ENCODE measurements at regions of chr11 and their contacts with region 1.

Region 1: GRCh38 chr11:76318744-76319384 is 62.1 kb downstream of the THAP12 start:
- DNase-seq: peak; percentile 56 to 95 (median 86)

Region 2: DNA sequence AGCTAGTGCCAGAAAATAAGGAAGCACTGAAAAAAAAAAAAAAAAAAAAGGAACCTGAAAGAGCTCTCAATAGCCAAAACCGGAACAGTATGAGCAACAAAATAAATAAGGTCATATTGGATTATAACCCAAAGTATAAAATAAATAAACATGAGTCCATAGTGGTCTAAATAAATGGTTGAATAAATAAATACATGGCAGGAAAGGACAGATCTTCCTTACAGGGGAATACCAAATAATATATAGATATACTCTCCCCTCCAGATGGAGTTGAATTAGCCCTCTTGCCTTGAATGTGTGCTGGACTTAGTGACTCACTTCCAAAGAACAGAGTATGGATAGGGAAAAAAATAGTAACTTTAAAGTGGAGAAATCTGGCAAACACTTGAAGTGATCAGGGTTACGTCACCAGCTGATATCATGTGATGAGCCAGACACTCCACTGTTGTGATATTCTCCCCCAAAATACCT is 953.1 kb before region 1 on chr11:
- intact Hi-C with region 1: no loop called
- DNase-seq: no peak

Region 3: DNA sequence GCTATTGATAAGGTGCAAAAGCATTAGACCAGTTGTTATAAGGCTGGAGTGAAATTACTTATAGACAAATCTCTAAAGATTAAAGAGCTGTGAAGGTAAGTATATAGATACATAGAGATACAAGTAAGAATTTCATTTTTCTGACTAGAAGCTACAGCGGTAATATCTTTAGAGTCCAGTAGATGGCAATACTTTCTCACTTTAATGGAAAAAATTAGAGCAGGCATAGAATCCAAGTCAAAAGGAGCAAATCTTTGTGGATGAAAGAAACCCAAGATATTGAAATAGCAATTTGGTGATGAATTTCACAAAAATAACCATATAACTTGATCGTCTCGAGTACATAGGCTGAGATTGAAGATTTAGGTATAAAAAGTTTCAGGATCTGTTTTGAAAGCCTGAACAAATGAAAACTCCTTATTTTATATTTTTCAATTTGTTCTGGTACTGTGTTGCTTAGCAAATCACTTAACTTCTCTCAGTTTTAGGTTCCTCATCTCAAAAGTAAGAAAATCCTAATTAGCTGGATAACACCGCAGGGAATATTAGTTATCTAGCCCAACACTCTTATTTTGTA is 421.9 kb before region 1 on chr11:
- intact Hi-C with region 1: loop called (anchors 10 kb)
- DNase-seq: no peak

Region 4: DNA sequence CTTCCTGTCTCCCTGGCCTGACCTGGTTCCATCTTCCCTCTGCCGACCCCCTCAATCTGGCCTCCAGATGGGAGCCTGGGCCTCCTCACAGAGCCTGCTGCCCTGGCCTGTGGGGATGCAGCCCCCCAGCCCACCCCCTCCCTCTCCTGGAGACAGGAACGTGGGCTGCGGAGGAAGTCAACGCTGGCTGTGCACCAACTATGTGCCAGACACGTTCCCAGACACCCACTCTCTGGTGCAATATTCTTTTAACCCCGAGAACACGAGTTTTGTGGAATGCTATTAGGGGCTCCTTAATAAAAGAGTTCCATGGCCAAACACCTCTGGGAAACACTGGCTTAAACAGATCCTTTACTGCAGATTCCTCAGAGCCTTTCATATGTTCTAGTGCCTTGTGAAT is 128.5 kb before region 1 on chr11:
- intact Hi-C with region 1: no loop called
- DNase-seq: no peak

Region 5: DNA sequence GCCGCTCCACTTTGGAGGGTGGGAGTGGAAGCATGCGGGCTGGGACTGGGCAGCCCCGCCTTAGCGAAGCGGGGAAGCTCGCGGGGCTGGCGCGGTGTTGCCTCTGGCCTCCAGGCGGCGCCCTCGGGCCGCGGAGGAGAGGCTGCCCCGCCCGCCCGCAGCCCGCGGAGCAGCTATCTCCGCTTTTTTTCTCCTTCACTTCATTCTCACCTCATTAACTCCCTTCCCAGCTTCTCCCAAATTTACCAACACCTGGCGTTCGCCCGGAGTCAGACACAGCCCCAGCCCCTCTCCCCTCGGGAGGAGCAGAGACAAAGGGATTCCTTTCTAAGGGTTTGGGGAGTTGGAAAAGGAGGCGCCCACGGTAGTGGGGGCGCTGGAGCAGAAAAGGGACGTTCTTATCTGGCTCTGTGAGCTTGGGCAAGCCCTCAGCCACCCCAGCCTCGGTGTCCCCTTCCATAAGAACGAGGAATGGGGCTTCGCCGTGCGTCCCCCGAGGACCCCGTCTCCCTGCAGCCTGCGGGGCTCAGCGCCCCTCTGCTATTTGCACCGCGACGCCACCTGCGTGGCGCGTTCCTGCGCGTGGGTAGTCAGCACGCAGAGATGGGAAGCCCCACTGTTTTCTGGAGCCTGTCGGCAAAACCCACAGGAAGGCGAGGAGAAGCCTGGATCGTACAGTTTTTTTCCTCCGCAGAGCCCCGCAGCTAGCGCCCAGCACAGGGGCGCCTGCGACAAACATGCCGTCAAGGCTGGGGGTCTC is 111.0 kb before region 1 on chr11:
- intact Hi-C with region 1: loop called (anchors 2 kb)
- DNase-seq: peak; percentile 25 to 91 (median 79)

Measured in head of caudate nucleus (tissue), 42 donors.